A673 (cell line): ENCODE measurements at regions of chr3 and their contacts with region 1.

Region 1: GRCh38 chr3:159884661-159885402 is 103.8 kb upstream of the IL12A start:
- DNase-seq: peak; percentile 64
- H3K4me3 ChIP-seq: no peak overlapping the region
- H3K27ac ChIP-seq: no peak overlapping the region
- H3K4me1 ChIP-seq: peaks cover 26% of the 10 kb centered on the region
- H3K27me3 ChIP-seq: peaks cover 12% of the 10 kb centered on the region
- CTCF ChIP-seq: peak; percentile 63

Region 2: DNA sequence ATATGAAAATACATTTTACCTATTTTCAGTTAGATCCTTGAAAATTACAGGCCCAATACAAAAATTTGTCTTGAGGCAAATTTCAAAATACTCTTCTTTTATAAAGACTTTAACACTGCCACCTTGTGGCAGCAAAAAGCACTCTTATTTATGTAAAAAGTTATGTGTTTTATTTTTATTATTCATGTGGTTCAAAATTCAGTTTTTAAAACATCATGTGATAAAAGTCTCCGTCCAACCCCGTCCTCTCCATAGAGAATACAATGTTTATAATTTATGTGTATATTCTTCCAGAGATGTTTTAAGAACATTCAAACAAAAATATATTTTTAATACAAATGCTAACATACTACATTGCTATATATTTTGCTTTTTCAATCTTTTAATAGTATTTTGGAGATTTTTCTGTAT is 601.6 kb after region 1 on chr3:
- CTCF ChIA-PET with region 1: interaction called, 5 read pairs
- POLR2A ChIA-PET with region 1: no interaction called
- intact Hi-C with region 1: loop called (anchors 5 kb)
- DNase-seq: peak; percentile 56
- H3K4me3 ChIP-seq: no peak overlapping the region
- H3K27ac ChIP-seq: no peak overlapping the region
- H3K4me1 ChIP-seq: no peaks in the 10 kb centered on the region
- H3K27me3 ChIP-seq: no peaks in the 10 kb centered on the region
- CTCF ChIP-seq: peak; percentile 74